Posterior vena cava (tissue), 2 donors: ENCODE measurements at regions of chr6 and their contacts with region 1.

Region 1: DNA sequence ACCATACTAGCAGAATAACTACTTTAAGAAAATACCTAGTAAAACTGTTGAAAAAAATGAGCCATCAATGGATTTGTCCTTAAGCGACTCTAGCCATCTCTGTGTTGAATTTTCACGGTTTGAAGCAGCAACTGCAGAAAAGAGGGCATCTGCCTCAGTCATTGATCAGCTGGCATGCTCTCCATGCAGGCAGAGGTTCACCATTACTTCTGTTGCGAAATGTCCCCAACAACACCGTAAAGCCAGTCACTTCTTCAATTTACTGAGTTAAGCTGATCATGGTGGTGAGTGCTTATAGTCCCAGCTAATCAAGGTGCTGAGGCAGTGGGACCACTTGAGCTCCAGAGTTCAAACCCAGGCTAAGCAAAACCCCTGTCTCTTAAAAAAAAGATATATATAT is 11.1 kb downstream of the TPD52L1 start:
- DNase-seq: no peak

Region 2: DNA sequence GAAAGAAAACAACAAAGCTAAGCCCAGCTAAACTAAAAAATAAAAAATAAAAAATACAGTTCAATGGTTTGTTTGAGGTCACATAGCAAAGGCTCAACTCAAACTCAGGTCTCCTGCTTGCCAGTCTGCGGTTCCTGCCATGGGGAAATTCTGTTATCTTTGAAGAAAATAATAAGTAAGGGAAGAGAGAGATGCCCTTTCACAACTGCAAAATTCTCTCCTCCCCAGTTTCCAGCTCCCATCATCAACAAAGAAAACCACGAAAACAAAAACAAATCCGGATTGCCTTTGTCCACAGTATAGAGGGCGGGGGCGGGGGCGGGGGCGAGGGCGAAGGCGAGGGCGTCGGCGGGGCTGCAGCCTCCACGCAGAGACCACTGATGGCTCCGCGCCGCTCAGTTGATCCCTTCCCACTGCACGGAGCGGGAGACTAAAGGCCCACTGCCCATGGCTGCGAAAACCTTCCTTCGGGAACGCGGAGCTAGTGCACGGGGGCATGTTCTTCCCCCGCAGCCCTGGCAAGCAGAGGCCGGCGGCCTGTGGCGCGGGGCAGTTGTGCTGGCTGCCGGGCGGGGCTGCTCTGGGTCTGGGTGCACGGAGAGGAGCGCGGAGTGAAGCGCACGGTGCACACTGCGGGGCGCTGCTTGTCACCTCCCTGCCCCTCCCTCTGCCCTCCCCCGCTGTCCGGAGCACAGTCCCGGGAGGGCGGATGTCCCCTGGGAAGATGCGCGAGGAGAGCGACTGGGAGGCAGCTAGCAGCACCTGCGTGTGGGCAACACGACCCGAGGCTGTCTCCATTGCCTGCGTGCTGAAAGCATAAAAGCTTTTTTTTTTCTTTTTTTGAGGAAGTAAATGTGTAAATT is 65.3 kb before region 1 on chr6:
- intact Hi-C with region 1: no loop called
- DNase-seq: peak; percentile 85

Region 3: DNA sequence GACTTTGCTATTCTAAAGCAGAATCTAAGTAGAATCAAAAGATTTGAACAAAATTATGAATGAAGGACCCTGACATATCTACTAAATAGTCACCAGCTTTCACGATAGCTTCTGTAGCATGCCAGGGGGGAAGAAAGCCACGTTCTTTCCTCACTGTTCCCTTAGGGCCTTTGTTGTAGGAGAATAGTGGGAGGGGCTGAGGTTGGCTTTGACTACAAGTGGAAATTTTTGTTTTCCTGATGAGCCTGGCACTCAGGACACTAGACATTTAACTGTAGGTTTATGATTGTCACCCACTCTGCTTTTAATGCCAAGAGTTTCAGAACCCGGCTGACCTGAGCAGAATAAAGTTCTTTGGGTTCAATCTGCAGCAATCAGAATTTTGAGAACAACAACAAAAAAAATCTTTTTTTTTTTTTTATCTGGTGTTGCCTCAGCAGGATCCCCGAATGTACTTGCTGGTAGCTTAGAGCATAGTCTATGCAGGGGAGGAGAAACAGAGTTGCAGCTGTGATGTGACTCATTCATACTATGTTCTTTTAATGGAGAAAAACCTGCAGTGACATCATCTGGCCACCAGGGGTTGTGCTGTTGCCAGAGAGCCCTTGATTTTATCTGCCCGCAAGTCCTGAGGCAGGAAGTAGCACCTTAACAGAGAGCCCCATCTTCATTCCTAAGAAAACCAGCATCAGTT is 27.4 kb after region 1 on chr6:
- intact Hi-C with region 1: loop called in 1 of 2 experiments (anchors 1 kb)
- DNase-seq: no peak

Region 4: GRCh38 chr6:125380474-125380873 is 215.8 kb after region 1 on chr6:
- intact Hi-C with region 1: no loop called
- DNase-seq: no peak

Region 5: GRCh38 chr6:125834348-125834747 is 669.7 kb after region 1 on chr6:
- intact Hi-C with region 1: no loop called
- DNase-seq: no peak